ENCODE measurements at regions of chr6 and their contacts with region 1.

Region 1: DNA sequence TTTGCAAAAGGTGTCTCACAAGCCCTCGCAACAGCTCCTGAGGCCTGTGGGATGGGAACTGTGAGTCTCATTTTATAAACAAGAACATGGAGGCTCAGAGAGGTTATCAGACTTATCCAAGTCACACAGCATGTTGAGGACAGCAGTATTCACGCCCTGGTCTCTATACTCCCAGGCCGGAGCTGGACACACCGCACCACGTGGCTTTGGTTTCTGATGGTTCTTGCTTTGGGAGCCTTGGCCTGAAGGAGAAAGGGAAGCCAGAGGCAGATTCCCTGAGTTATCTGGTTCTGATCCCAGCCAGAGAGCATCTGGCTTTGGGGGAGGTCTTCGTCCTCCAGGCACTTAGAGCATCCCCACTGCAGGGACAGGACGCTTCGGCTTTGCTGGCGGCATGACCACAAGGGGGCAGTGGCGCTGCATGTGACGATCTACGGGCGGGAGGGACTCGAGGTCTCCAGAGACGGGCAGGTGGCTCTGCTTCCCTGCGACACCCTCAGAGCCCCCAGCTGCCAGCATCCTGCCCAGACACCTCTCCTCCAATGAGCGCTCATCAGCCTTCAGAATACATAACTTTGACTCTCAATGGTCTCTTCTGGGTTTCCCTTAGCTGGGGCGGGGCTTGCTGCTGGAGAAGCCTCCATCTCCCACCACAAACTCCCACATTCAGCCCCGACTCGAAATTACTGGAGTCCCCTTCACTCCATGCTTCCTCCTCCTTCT is 51.4 kb upstream of the SAYSD1 start:
- DNase-seq: peak; percentile 89
- H3K4me3 Mint-ChIP-seq: no peak overlapping the region
- H3K27ac Mint-ChIP-seq: no peak overlapping the region
- H3K4me1 Mint-ChIP-seq: no peaks in the 10 kb centered on the region
- H3K27me3 Mint-ChIP-seq: peaks cover 27% of the 10 kb centered on the region

Region 2: GRCh38 chr6:39088331-39088730 is 78.0 kb before region 1 on chr6:
- CTCF ChIA-PET with region 1: interaction called, 17 read pairs
- DNase-seq: peak; percentile 42
- H3K4me3 Mint-ChIP-seq: no peak overlapping the region
- H3K27ac Mint-ChIP-seq: no peak overlapping the region
- H3K4me1 Mint-ChIP-seq: no peaks in the 10 kb centered on the region
- H3K27me3 Mint-ChIP-seq: peaks cover 69% of the 10 kb centered on the region

Region 3: GRCh38 chr6:39153766-39154397 is 12.5 kb before region 1 on chr6:
- CTCF ChIA-PET with region 1: interaction called, 17 read pairs
- DNase-seq: no peak
- H3K4me3 Mint-ChIP-seq: no peak overlapping the region
- H3K27ac Mint-ChIP-seq: no peak overlapping the region
- H3K4me1 Mint-ChIP-seq: peaks cover 18% of the 10 kb centered on the region
- H3K27me3 Mint-ChIP-seq: peaks cover 11% of the 10 kb centered on the region

Measured in activated naive CD4-positive, alpha-beta T cell treated with anti-CD3 and anti-CD28 coated beads, Interleukin-2, amount 10 ng/mL, durations not matched to agents 7 days and 5 days (primary cell).